Activated CD8-positive, alpha-beta T cell treated with anti-CD3 and anti-CD28 coated beads for 36 hours (primary cell): ENCODE measurements at regions of chr14 and their contacts with region 1.

Region 1: DNA sequence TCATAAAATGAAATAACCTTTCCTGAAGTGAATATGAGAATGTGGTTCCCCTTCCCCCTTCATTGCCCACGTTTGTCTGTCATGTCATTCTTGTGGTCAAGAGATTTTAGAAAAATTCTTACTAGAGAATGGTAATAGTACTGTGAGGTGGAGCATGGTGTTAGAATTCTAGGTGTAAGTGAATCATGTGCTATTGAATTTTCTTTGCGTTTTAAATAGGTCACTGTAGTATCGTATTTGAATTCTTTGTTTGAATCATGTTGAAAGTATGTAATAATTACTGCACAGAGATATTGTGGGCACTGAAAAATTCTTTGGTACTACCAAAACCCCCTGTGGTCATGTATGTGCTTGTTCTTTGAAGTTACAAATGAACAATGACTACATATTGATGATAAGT is 49.9 kb downstream of the FUT8 start:
- DNase-seq: peak; percentile 79
- ATAC-seq: peak; percentile 94
- H3K4me3 Mint-ChIP-seq: peak overlapping the region; percentile 0
- H3K27ac Mint-ChIP-seq: peak overlapping the region; percentile 81
- H3K4me1 Mint-ChIP-seq: peaks cover 51% of the 10 kb centered on the region
- H3K27me3 Mint-ChIP-seq: no peaks in the 10 kb centered on the region
- CTCF ChIP-seq: no peak

Region 2: GRCh38 chr14:65425885-65426284 is 36.5 kb before region 1 on chr14:
- CTCF ChIA-PET with region 1: no interaction called
- POLR2A ChIA-PET with region 1: no interaction called
- intact Hi-C with region 1: loop called (anchors 5 kb)
- DNase-seq: no peak
- ATAC-seq: no peak
- H3K4me3 Mint-ChIP-seq: no peak overlapping the region
- H3K27ac Mint-ChIP-seq: peak overlapping the region; percentile 4
- H3K4me1 Mint-ChIP-seq: peaks cover 42% of the 10 kb centered on the region
- H3K27me3 Mint-ChIP-seq: no peaks in the 10 kb centered on the region
- CTCF ChIP-seq: no peak